ENCODE measurements at regions of chr6 and their contacts with region 1.

Region 1: GRCh38 chr6:46583081-46583480 is 69.5 kb downstream of the CYP39A1 start:
- DNase-seq: no peak
- ATAC-seq: no peak

Region 2: GRCh38 chr6:46521464-46521971 is 61.6 kb before region 1 on chr6:
- intact Hi-C with region 1: loop called in 1 of 2 experiments (anchors 10 kb)
- DNase-seq: no peak
- ATAC-seq: peak; percentile 55 to 72

Region 3: GRCh38 chr6:46734867-46735719 is 152.0 kb after region 1 on chr6 and contains the start of gene PLA2G7:
- intact Hi-C with region 1: no loop called
- DNase-seq: no peak
- ATAC-seq: peak; percentile 74 to 86
- total RNA-seq, gene PLA2G7: 0.32 to 0.55 TPM